Dendritic cell treated with granulocyte-macrophage colony-stimulating factor and Interleukin-4, amounts not matched to agents 40 ng/mL and 50 ng/mL, for 4 days (primary cell): ENCODE measurements at regions of chr7 and their contacts with region 1.

Region 1: DNA sequence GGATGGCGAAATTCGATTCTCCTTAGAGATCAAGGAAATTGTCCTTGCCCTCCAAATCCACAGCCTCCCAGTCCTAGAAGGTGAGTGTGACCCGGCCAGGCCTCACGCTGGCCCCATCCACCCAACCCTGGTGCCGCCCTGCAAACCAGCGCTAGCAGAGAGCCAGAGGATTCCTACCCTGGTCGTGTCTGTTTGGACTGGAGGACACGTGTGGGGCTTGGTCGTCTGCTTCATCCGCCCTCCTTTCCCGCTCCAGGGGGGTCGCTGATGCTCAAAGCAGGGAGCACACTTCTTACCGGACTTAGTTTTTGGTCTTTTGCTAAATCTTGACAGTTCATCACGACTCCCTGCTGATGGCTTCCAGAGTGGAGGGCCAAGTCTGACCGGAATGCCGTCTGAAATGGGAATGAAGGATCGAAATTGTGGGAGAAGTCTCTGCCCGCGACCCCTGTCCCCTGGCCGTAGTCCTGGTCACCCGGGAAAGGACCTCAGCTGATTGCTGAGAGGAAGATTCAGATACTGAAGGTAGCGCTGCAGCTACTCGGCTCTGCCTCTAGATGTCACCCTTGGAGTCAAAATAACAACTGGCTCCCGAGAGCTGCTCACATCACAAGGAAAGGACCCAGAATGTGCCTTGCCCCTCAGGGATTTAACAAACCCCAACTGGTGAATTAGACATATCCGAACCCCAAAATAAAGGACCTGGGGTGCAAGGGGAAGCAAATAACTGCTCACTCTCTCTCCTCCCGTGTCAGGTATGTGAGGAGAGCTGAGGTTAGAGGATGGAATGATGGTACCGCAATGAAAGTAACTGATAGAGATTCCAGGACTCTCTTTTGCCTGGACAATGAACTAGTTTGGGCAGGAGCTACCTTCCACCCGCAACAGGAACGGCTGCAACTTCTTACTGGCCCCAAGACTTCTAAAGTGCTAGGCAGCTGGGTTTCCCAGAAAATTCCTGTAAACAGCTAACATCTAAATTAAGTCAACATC is 23.5 kb upstream of the ORC5 start:
- H3K4me3 Mint-ChIP-seq: no peak overlapping the region
- H3K27ac Mint-ChIP-seq: no peak overlapping the region
- H3K4me1 Mint-ChIP-seq: no peaks in the 10 kb centered on the region
- H3K27me3 Mint-ChIP-seq: peaks cover 15% of the 10 kb centered on the region

Region 2: DNA sequence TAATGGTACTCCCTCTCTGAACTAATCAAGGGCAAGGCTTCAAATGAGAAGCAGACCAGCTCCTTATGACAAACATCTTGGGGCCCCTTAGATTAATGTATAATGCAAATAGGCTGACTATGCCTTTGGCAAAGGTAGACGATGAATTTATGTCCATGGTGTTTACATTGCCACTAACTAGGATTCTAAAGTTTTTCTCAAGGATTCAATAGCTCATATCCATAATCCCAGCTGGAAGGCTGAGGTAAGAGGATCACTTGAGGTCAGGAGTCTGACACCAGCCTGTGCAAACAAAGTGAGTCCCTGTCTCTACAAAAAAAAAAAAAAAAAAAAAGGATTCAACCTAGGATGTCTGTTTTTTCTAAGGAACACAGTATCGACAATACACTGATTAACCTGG is 120.1 kb before region 1 on chr7:
- intact Hi-C with region 1: no loop called
- H3K4me3 Mint-ChIP-seq: no peak overlapping the region
- H3K27ac Mint-ChIP-seq: no peak overlapping the region
- H3K4me1 Mint-ChIP-seq: no peaks in the 10 kb centered on the region
- H3K27me3 Mint-ChIP-seq: peaks cover 4% of the 10 kb centered on the region

Region 3: DNA sequence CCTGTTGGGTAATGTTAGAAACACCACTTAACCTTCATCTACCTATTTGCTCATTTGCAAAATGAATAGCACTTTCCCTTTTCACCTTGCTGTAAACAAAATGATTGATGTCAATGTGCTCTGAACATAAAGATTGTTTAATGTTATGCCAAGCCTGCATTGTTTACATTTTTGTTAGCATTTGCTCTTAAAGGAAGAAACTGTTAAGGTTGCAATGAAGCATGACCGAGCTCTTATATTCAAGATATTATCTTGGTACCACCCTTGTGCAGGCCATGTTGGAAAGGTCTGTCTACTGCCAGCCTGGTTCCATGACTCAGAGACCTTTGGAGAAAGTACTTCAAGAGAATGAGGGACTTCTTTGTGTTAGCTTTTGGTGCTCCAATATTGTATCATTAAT is 267.9 kb after region 1 on chr7:
- intact Hi-C with region 1: no loop called
- H3K4me3 Mint-ChIP-seq: no peak overlapping the region
- H3K27ac Mint-ChIP-seq: no peak overlapping the region
- H3K4me1 Mint-ChIP-seq: no peaks in the 10 kb centered on the region
- H3K27me3 Mint-ChIP-seq: no peaks in the 10 kb centered on the region

Region 4: DNA sequence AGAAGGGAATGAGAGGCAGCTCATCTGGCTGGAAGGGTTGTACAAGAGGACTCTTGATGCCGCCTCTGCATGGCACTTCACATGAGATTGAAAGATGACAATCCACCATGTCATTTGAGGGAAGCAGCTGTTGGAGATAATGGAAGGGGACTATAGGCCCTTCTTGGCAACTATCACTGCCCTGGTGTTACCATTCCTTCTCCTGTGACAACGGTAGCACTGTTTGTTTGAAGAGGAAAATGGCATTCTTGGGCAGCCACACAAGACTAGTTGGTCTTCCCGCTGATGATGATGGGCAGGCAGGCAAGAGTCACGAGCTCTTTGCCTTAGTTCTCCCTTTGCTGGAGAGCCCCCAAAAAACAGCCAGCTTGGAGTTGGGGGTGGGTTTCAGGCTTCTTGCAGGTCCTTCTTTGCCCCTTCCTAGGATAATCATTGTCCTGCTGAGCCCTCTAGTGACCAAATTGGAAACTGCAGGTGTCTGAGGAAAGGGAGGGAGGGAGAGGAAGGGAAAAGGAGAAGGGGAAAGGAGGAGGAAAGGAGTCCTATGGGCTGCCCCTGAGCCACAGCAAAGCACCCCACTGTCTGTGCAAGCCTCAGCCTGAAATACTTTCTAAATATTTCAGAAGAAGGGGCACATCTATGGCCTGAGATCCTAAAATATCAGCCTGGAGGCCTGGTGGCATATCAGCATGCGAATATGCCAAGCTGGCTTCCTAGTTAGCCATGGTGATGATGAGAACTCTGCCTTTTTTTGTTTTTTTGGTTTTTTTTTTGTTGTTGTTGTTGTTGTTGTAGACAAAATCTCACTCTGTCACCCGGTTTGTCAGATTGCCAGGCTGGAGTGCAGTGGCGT is 617.0 kb after region 1 on chr7:
- intact Hi-C with region 1: loop called (anchors 2 kb)
- H3K4me3 Mint-ChIP-seq: no peak overlapping the region
- H3K27ac Mint-ChIP-seq: no peak overlapping the region
- H3K4me1 Mint-ChIP-seq: no peaks in the 10 kb centered on the region
- H3K27me3 Mint-ChIP-seq: peaks cover 6% of the 10 kb centered on the region